WTC11 (cell line): ENCODE measurements at regions of chr10 and their contacts with region 1.

Region 1: GRCh38 chr10:101060036-101060950 is 1.5 kb upstream of the KAZALD1 start:
- DNase-seq: peak; percentile 90
- ATAC-seq: peak; percentile 43
- H3K4me3 Mint-ChIP-seq: peak overlapping the region; percentile 97
- H3K27ac Mint-ChIP-seq: peak overlapping the region; percentile 98
- H3K4me1 Mint-ChIP-seq: peaks cover 38% of the 10 kb centered on the region
- H3K27me3 Mint-ChIP-seq: peaks cover 38% of the 10 kb centered on the region
- CTCF ChIP-seq: peak; percentile 84

Region 2: GRCh38 chr10:100838986-100839385 is 221.3 kb before region 1 on chr10:
- CTCF ChIA-PET with region 1: no interaction called
- POLR2A ChIA-PET with region 1: no interaction called
- DNase-seq: no peak
- ATAC-seq: no peak
- H3K4me3 Mint-ChIP-seq: no peak overlapping the region
- H3K27ac Mint-ChIP-seq: no peak overlapping the region
- H3K4me1 Mint-ChIP-seq: no peaks in the 10 kb centered on the region
- H3K27me3 Mint-ChIP-seq: peaks cover 15% of the 10 kb centered on the region
- CTCF ChIP-seq: no peak

Region 3: DNA sequence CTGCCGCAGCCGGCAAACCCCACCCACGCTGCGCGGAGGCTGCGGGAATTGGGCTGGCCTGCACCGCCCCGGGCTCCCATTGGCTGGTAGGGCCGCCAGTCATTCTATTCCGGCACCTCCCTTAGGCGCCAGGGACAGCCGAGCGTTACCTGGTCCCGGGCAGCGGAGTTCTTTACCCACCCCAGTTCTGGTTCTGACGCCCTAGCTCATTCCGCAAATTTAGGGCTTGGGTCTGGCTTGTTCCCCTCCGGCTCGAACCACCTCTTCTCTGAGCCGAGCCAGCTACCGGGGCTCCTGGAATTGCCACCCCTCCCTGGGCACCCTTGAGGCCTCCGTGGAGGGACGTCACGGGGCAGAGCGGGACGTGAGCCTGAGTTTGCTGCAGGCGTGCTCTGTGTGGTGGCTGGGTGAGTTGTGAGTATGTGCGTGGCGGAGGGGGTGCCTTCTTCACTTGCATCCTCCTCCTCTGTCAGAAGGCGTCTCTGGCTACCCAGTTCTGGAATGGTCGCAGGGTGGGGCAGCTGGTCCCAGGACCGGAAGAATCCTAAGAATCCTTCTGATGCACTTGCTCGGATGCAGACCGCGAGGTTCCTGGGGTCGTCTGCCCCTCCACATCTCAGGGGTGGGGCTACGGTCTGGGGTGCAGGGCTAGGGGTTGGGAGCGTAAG is 29.0 kb before region 1 on chr10 and contains the starts of genes PDZD7 and SFXN3:
- CTCF ChIA-PET with region 1: interaction called, 19 read pairs
- POLR2A ChIA-PET with region 1: interaction called, 3 read pairs
- DNase-seq: peak; percentile 97
- ATAC-seq: peak; percentile 88
- H3K4me3 Mint-ChIP-seq: peak within 1 kb of the TSS; percentile 75
- H3K27ac Mint-ChIP-seq: no peak within 1 kb of the TSS
- H3K4me1 Mint-ChIP-seq: peaks cover 36% of the 10 kb centered on the region
- H3K27me3 Mint-ChIP-seq: peaks cover 55% of the 10 kb centered on the region
- CTCF ChIP-seq: no peak
- total RNA-seq, gene PDZD7: 1.9 to 2.7 TPM (median 2.6 TPM) in 3 replicates
- total RNA-seq, gene SFXN3: 2.5 to 5.6 TPM (median 3.2 TPM) in 3 replicates

Region 4: GRCh38 chr10:101075775-101076174 is 15.5 kb after region 1 on chr10:
- CTCF ChIA-PET with region 1: interaction called, 18 read pairs
- POLR2A ChIA-PET with region 1: no interaction called
- DNase-seq: no peak
- ATAC-seq: no peak
- H3K4me3 Mint-ChIP-seq: no peak overlapping the region
- H3K27ac Mint-ChIP-seq: no peak overlapping the region
- H3K4me1 Mint-ChIP-seq: peaks cover 41% of the 10 kb centered on the region
- H3K27me3 Mint-ChIP-seq: peaks cover 79% of the 10 kb centered on the region
- CTCF ChIP-seq: no peak

Region 5: DNA sequence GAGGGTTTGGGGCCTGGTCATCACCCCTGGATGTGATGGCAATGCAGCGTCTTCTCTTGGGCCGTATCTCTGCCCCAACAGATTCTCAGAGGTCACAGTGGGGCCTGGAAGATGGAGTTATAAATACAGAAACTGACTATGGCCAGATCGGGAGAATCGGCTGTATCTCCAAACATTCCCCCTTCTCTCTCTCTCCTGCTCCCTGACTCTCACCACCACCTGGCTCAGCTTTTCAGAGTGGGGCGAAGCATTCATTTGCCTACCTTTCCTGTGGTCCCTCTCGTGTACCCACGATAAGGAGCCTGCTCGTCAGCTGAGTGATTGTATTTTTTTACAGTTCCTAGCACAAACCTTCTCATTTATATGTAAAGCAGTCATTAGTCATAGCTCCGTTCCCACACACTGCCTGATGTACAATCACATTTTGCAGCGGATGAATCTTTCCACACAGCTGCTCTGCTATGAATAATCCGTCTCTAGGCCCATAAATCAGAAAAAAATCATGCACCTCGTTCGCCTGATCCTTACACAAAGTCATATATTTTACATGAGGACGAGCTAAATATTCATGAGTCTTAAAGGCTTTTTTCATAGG is 270.4 kb after region 1 on chr10:
- CTCF ChIA-PET with region 1: no interaction called
- POLR2A ChIA-PET with region 1: no interaction called
- DNase-seq: no peak
- ATAC-seq: no peak
- H3K4me3 Mint-ChIP-seq: no peak overlapping the region
- H3K27ac Mint-ChIP-seq: no peak overlapping the region
- H3K4me1 Mint-ChIP-seq: peaks cover 11% of the 10 kb centered on the region
- H3K27me3 Mint-ChIP-seq: peaks cover 3% of the 10 kb centered on the region; the same call in 1 of the 2 replicates
- CTCF ChIP-seq: no peak